ENCODE measurements at regions of chr2 and their contacts with region 1.

Region 1: GRCh38 chr2:195656859-195657633 is at the start of gene SLC39A10:
- DNase-seq: peak; percentile 94
- H3K4me3 ChIP-seq: peak within 1 kb of the TSS; percentile 87
- CTCF ChIP-seq: no peak

Region 2: DNA sequence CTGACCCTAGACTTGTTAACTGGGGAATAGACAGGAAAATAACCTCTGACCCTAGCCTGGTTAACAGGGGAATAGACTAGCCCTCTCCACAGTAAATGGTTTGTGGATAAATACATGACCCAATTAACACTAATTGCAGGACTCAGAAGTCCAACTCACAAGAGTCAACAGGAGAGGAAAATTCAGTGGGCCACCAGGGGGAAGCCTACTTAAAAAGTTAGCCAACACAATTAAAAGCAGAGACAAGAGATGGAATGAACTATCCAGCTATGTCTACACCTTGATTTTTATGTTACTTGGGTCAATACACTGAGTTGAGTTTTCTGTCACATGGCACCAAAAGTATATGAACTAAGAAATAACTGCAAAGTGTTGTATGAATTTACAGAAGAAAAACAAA is 158.9 kb before region 1 on chr2:
- CTCF ChIA-PET with region 1: interaction called, 27 read pairs
- POLR2A ChIA-PET with region 1: interaction called, 8 read pairs
- DNase-seq: no peak
- H3K4me3 ChIP-seq: no peak overlapping the region
- CTCF ChIP-seq: no peak

Region 3: DNA sequence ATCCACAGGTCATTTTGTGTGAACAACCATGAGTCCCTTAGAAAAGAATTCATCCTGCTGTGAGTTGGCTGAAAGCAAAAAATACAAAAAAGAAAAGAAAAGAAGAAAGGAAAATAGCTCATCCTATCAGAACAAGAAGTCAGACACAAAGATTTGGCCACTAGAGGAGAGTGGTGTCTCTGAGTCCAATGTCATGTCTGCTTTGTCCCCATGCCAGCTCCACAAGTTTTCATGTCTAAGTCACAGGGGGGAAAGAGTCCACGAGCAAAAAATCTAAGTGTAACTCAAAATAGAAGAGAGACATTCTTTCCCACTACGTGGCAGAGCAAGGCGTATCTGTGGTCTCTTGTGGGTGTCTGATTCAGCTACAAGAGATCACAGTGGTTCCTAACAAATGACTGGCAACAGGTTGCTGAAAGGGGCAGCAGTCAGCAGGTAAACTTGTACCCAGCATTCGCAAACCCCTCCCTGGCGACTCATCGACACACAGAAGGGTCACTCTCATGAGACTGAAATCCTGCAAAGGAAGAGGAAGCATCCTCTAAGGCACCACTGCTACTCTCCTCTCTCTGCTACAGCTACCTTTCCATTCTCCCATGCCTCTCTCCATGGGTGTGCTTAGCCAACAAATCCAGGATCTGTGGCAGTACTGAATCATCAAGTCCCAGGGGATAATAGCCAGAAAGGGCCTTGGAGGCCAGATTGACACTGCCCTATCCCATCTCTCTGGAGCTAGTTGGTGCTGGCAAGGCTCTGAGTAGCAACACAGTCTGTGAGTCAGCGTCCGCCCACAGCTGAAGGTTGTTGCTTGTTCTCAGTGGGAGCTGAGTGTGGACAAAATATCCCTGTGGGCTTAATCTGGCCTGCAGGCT is 123.0 kb before region 1 on chr2:
- CTCF ChIA-PET with region 1: interaction called, 8 read pairs
- POLR2A ChIA-PET with region 1: interaction called, 30 read pairs
- DNase-seq: peak; percentile 89
- H3K4me3 ChIP-seq: peak overlapping the region; percentile 32
- CTCF ChIP-seq: peak; percentile 13

Region 4: DNA sequence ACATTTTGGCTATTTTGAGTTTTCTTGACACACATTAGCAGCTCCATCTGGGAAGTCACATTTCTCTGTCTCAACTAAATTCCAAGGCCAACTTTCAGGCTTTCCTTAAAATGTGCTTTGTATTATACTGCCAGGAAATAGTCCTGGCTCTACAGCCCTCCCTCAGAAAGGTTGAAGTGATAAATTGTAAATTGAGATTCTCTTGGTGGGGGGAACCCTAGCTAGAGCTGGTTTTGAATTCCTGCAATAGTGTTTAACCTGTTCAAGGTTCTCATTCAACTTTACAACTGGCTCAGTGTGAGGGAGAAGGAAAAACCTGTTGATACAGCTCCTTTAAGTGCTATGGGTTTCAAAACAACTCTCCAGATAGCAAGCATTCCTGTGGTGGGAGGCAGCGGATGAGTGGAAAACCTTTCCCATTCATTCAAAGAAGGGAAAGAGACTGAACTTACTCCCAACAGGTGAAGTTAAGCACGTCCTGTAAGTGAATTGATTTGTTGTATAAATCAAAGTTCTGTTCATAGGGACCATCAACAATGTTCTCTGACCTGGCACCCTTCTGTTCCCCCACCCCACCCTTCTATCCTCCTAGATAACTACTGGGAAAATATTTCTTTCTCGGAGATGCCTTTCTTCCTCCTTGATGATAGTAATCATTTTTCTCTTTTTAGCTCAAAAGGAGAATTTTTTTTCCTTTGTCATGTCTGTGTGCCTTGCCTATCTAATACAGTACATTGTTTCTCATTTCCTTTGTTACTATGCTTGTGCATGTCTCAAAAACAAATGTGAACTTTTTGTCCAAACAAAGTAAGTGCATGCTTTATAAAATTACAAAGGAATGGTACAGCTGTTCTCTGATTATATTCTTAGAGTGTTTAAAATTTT is 44.2 kb before region 1 on chr2:
- CTCF ChIA-PET with region 1: interaction called, 3 read pairs
- POLR2A ChIA-PET with region 1: interaction called, 16 read pairs
- DNase-seq: peak; percentile 47
- H3K4me3 ChIP-seq: peak overlapping the region; percentile 48
- CTCF ChIP-seq: no peak

Region 5: DNA sequence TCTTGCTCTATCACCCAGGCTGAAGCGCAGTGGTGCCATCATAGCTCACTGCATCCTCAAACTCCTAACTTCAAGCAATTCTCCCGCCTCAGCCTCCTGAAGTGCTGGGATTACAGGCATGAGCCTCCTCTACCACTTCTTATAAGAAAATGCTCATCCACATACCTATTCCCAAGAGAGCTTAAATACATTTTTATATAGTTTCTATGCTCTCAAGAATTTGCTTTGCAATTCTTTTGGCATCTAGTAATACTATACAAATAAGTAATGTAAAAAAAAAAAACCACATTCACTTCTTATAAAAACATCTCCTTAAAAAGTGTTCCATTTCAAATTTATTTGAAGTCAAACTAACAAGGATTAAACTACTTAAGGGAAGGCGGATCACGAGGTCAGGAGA is 214.3 kb after region 1 on chr2:
- CTCF ChIA-PET with region 1: no interaction called
- POLR2A ChIA-PET with region 1: no interaction called
- DNase-seq: peak; percentile 62
- H3K4me3 ChIP-seq: no peak overlapping the region
- CTCF ChIP-seq: no peak

Region 6: GRCh38 chr2:195937176-195937575 is 280.1 kb after region 1 on chr2:
- CTCF ChIA-PET with region 1: interaction called, 214 read pairs
- POLR2A ChIA-PET with region 1: interaction called, 3 read pairs
- DNase-seq: no peak
- H3K4me3 ChIP-seq: no peak overlapping the region
- CTCF ChIP-seq: no peak

Measured in AG04449 (cell line).